Common myeloid progenitor, CD34-positive (primary cell): ENCODE measurements at regions of chr2 and their contacts with region 1.

Region 1: GRCh38 chr2:113700186-113700841 is 56.1 kb downstream of the SLC35F5 start:
- DNase-seq: peak; percentile 80 to 90 (median 88)
- H3K4me3 ChIP-seq: peak overlapping the region in 5 of 7 experiments; percentile 10 to 71 (median 20)
- H3K27ac ChIP-seq: no peak overlapping the region
- H3K4me1 ChIP-seq: peaks cover 0 to 9% (median 5%) of the 10 kb centered on the region in 4 experiments
- H3K27me3 ChIP-seq: no peaks in the 10 kb centered on the region

Region 2: DNA sequence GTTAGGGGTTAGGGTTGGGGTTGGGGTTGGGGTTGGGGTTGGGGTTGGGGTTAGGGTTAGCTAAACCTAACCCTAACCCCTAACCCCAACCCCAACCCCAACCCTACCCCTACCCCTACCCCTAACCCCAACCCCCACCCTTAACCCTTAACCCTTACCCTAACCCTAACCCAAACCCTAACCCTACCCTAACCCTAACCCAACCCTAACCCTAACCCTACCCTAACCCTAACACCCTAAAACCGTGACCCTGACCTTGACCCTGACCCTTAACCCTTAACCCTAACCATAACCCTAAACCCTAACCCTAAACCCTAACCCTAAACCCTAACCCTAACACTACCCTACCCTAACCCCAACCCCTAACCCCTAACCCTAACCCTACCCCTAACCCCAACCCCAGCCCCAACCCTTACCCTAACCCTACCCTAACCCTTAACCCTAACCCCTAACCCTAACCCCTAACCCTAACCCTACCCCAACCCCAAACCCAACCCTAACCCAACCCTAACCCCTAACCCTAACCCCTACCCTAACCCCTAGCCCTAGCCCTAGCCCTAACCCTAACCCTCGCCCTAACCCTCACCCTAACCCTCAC is 97.3 kb before region 1 on chr2:
- CTCF ChIA-PET with region 1: interaction called, 10 read pairs
- POLR2A ChIA-PET with region 1: no interaction called
- DNase-seq: peak in 2 of 3 donors; percentile 20 to 27
- H3K4me3 ChIP-seq: peak overlapping the region in 6 of 7 experiments; percentile 24 to 71 (median 67)
- H3K27ac ChIP-seq: peak overlapping the region in 1 of 2 experiments; percentile 61
- H3K4me1 ChIP-seq: peaks cover 0 to 3% (median under 1%) of the 10 kb centered on the region in 4 experiments
- H3K27me3 ChIP-seq: no peaks in the 10 kb centered on the region